ENCODE measurements at regions of chr18 and their contacts with region 1.

Region 1: GRCh38 chr18:58781627-58782194 is 83.0 kb upstream of the ZNF532 start:
- DNase-seq: peak; percentile 75 to 82 (median 77)
- ATAC-seq: peak; percentile 86 to 91 (median 90)
- H3K4me3 ChIP-seq: no peak overlapping the region
- H3K27ac ChIP-seq: peak overlapping the region in 2 of 12 donors; percentile 21 to 58
- H3K4me1 ChIP-seq: peaks cover 0 to 28% (median 12%) of the 10 kb centered on the region in 12 donors
- H3K27me3 ChIP-seq: no peaks in the 10 kb centered on the region
- CTCF ChIP-seq: peak; percentile 84 to 97 (median 92)
- POLR2A ChIP-seq: no peak

Region 2: DNA sequence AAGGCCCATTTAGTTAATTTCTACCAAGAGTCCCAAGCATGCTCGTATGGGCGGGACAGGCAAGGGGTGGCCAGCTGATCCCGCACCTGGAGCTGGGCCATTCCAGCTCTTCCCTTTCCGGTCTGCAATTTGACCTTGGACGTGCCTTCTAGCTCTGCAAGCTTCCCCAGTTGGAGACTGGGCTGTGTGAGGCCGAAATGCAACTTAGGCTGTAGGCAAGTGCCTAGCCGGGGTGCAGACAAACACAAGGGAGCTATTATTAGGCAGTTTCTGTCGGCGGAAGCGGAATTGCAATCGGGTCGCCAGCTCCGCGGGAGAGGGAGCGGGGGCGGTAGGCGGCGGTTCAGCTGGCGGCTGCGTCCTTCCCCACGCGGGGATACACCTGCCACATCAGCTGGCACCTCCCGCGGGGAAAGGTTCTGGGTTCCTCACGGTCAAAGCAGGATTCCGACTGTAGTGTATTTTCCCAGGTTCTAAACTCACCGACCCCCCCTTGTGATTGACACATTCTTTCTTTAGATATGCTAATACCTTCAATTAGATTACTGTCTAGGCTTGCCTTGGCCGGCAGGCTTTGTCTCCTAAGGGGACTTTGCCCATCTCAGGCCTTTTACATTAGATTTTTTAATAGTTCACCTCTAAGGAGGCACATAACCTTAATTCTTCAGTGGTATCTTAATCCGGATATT is 65.8 kb after region 1 on chr18:
- intact Hi-C with region 1: loop called in 2 of 10 experiments (anchors 5 kb)
- DNase-seq: peak; percentile 55 to 71 (median 63)
- ATAC-seq: peak in 3 of 4 donors; percentile 52 to 66 (median 60)
- H3K4me3 ChIP-seq: peak overlapping the region in 11 of 12 donors; percentile 2 to 54 (median 45)
- H3K27ac ChIP-seq: peak overlapping the region in 10 of 12 donors; percentile 1 to 70 (median 56)
- H3K4me1 ChIP-seq: peaks cover 0 to 36% (median 13%) of the 10 kb centered on the region in 12 donors
- H3K27me3 ChIP-seq: no peaks in the 10 kb centered on the region
- CTCF ChIP-seq: no peak
- POLR2A ChIP-seq: no peak

Region 3: GRCh38 chr18:58858616-58859468 is 77.1 kb after region 1 on chr18:
- intact Hi-C with region 1: loop called in 5 of 10 experiments (anchors 5 kb)
- DNase-seq: peak in 2 of 5 donors; percentile 44 to 51
- ATAC-seq: peak in 3 of 4 donors; percentile 23 to 67 (median 62)
- H3K4me3 ChIP-seq: no peak overlapping the region
- H3K27ac ChIP-seq: peak overlapping the region in 3 of 12 donors; percentile 4 to 67 (median 53)
- H3K4me1 ChIP-seq: peaks cover 14 to 48% (median 40%) of the 10 kb centered on the region in 12 donors
- H3K27me3 ChIP-seq: no peaks in the 10 kb centered on the region
- CTCF ChIP-seq: no peak
- POLR2A ChIP-seq: no peak

Region 4: GRCh38 chr18:58864146-58865032 is 82.7 kb after region 1 on chr18 and contains the start of gene ZNF532:
- intact Hi-C with region 1: loop called in 5 of 10 experiments (anchors 5 kb)
- DNase-seq: peak in 3 of 5 donors; percentile 51 to 60 (median 57)
- ATAC-seq: peak; percentile 46 to 73 (median 56)
- H3K4me3 ChIP-seq: peak within 1 kb of the TSS; percentile 29 to 76 (median 55)
- H3K27ac ChIP-seq: peak within 1 kb of the TSS; percentile 92 to 100 (median 98)
- H3K4me1 ChIP-seq: peaks cover 21 to 93% (median 77%) of the 10 kb centered on the region in 12 donors
- H3K27me3 ChIP-seq: no peaks in the 10 kb centered on the region
- CTCF ChIP-seq: no peak
- POLR2A ChIP-seq: no peak
- total RNA-seq, gene ZNF532: 50.7 to 84.4 (median 70.9) TPM

Region 5: GRCh38 chr18:58991167-58991798 is 209.6 kb after region 1 on chr18:
- intact Hi-C with region 1: loop called in 3 of 10 experiments (anchors 5 kb)
- DNase-seq: no peak
- ATAC-seq: peak; percentile 18 to 64 (median 60)
- H3K4me3 ChIP-seq: no peak overlapping the region
- H3K27ac ChIP-seq: peak overlapping the region in 11 of 12 donors; percentile 58 to 95 (median 82)
- H3K4me1 ChIP-seq: peaks cover 14 to 65% (median 48%) of the 10 kb centered on the region in 12 donors
- H3K27me3 ChIP-seq: no peaks in the 10 kb centered on the region
- CTCF ChIP-seq: peak in 2 of 12 donors; percentile 8 to 26
- POLR2A ChIP-seq: no peak

Region 6: DNA sequence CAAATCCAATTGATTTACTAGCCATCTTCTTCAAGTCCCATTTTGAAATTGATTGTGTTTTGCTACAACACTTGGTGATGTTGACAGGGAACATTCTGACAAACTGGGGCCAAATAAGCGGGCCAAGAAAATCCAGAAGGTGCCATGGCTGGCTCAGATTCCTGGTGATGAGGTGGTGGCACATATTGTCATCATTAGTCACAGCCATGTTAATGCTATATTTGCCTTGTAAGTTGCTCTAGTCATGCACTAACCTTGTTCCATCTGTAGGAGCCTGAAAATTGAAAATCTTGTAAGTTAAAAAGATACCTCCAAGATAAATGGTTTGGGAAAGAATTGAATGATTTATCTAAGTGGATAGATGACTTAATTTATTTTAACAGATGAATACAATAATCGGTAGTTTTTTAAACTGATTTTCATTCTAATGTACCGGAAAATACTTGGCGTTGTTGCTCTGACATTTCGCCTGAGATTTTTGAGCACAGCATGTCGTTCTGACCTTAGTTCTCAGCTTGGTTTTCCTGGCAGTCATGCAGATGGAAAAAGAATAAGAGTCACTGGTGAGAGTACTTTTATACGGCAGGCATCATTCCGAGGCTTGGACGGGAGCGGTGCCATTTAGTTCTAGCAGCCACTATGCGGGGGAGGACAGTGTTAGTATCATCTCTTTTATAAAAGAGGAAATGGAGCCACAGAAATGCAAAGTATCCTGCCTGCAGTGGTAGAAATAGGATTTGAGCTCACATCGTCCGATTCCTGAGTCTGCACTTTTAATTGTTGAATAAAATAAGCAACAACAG is 216.9 kb after region 1 on chr18:
- intact Hi-C with region 1: loop called in 3 of 10 experiments (anchors 5 kb)
- DNase-seq: peak; percentile 70 to 80 (median 72)
- ATAC-seq: peak; percentile 87 to 89 (median 88)
- H3K4me3 ChIP-seq: peak overlapping the region in 8 of 12 donors; percentile 10 to 36 (median 26)
- H3K27ac ChIP-seq: peak overlapping the region; percentile 81 to 95 (median 88)
- H3K4me1 ChIP-seq: peaks cover 11 to 62% (median 46%) of the 10 kb centered on the region in 12 donors
- H3K27me3 ChIP-seq: no peaks in the 10 kb centered on the region
- CTCF ChIP-seq: peak in 1 of 12 donors; percentile 20
- POLR2A ChIP-seq: peak in 1 of 2 donors; percentile 31

Region 7: DNA sequence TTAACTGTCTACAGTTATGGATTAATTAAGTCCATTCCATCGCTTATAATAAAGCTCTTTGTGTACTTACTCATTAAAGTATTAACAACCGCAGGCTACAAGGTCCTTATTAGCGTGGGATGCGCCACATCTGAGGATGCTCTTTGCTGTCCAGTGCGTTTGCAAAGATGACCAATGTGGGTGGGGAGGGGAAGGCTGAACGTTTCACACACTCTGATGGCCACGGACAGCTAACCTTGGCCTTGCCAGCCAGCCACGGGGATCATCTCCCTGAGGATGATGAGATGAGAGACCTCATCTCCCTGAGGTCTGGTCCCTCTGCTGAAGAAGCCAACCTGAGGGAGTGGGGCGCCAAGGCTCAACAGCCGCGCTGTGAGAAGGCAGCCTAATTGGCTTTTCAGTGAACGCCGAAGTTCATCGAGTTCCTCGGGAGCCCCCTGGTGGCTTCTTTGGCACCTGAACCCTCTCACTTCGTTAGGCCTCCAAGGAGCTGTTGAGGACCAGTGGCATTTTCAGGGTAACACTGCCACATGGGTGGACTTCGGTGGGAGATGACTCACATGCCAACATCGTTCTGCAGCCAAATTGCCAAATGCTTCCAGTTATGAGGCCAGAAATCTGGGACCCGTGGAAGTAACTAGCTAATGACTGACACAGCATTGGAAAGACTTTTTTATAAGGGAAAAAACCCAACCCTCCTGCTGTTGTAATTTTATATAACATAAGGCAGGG is 288.6 kb after region 1 on chr18:
- intact Hi-C with region 1: loop called in 9 of 10 experiments (anchors 1 to 2 kb)
- DNase-seq: peak; percentile 82 to 87 (median 82)
- ATAC-seq: peak; percentile 70 to 91 (median 88)
- H3K4me3 ChIP-seq: no peak overlapping the region
- H3K27ac ChIP-seq: no peak overlapping the region
- H3K4me1 ChIP-seq: no peaks in the 10 kb centered on the region
- H3K27me3 ChIP-seq: no peaks in the 10 kb centered on the region
- CTCF ChIP-seq: peak; percentile 81 to 94 (median 86)
- POLR2A ChIP-seq: no peak